ENCODE measurements at regions of chr17 and their contacts with region 1.

Region 1: GRCh38 chr17:73092523-73093135 is at the start of gene SLC39A11:
- DNase-seq: peak; percentile 97
- H3K4me3 Mint-ChIP-seq: peak within 1 kb of the TSS; percentile 100
- H3K27ac Mint-ChIP-seq: peak within 1 kb of the TSS; percentile 99
- H3K4me1 Mint-ChIP-seq: peaks cover 20% of the 10 kb centered on the region
- H3K27me3 Mint-ChIP-seq: peaks cover 13% of the 10 kb centered on the region
- total RNA-seq, gene SLC39A11: 24.6 and 26.1 TPM in 2 replicates

Region 2: GRCh38 chr17:72863526-72864211 is 229.0 kb before region 1 on chr17:
- intact Hi-C with region 1: loop called (anchors 5 kb)
- DNase-seq: peak; percentile 55
- H3K4me3 Mint-ChIP-seq: peak overlapping the region; percentile 16
- H3K27ac Mint-ChIP-seq: peak overlapping the region; percentile 70
- H3K4me1 Mint-ChIP-seq: peaks cover 29% of the 10 kb centered on the region
- H3K27me3 Mint-ChIP-seq: no peaks in the 10 kb centered on the region

Region 3: GRCh38 chr17:73156166-73156840 is 63.7 kb after region 1 on chr17:
- intact Hi-C with region 1: loop called (anchors 5 kb)
- DNase-seq: peak; percentile 87
- H3K4me3 Mint-ChIP-seq: no peak overlapping the region
- H3K27ac Mint-ChIP-seq: no peak overlapping the region
- H3K4me1 Mint-ChIP-seq: peaks cover 4% of the 10 kb centered on the region
- H3K27me3 Mint-ChIP-seq: peaks cover 15% of the 10 kb centered on the region

Region 4: DNA sequence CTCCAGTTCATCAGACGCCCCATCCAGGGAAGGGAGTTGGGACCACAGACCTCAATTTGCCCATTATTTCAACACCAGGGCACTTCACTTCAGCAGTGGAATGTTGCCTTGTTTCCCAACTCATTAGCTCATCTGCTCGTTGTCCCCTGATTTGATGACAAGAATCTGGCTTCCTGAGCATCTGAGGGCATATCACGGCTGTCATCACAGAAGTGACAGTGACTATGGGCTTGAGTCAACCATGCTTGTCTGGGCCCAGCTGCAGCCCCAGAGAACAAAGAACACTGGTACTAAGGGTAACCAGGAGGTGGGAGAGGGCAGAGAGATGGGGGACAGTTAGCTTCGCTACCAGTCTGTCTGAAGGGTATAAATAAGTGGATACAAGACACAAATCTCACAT is 817.6 kb after region 1 on chr17:
- intact Hi-C with region 1: no loop called
- DNase-seq: no peak
- H3K4me3 Mint-ChIP-seq: no peak overlapping the region
- H3K27ac Mint-ChIP-seq: no peak overlapping the region
- H3K4me1 Mint-ChIP-seq: no peaks in the 10 kb centered on the region
- H3K27me3 Mint-ChIP-seq: peaks cover 6% of the 10 kb centered on the region